ENCODE measurements at regions of chr6 and their contacts with region 1.

Region 1: DNA sequence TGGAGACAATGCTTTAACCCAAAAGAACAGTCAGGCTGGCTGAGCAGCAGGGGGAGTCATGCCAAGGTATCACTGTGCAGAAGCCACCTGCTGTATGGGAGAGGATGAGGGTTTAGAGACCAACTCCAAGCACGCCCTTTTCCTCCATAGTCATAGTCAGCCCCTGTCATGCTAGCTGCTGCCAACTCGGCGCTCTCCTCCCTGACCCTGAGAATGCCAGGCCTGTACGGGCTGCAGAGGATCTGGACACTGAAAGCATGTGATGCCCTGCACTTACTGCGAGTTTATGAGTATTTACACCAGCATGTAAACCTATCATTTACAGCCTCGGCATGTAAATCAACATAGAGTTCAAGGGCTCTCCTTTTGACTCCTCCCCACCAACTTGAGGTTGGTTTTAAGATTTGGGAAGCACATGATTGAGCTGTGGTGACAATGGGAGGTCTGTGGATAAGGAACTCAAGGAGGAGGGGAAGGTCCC is 11.7 kb upstream of the SCUBE3 start:
- DNase-seq: no peak
- H3K4me3 Mint-ChIP-seq: no peak overlapping the region
- H3K27ac Mint-ChIP-seq: no peak overlapping the region
- H3K4me1 Mint-ChIP-seq: no peaks in the 10 kb centered on the region
- H3K27me3 Mint-ChIP-seq: peaks cover 25% of the 10 kb centered on the region

Region 2: GRCh38 chr6:34922177-34922663 is 279.9 kb before region 1 on chr6:
- CTCF ChIA-PET with region 1: no interaction called
- POLR2A ChIA-PET with region 1: no interaction called
- intact Hi-C with region 1: no loop called
- DNase-seq: no peak
- H3K4me3 Mint-ChIP-seq: no peak overlapping the region
- H3K27ac Mint-ChIP-seq: no peak overlapping the region
- H3K4me1 Mint-ChIP-seq: peaks cover 2% of the 10 kb centered on the region
- H3K27me3 Mint-ChIP-seq: no peaks in the 10 kb centered on the region

Region 3: DNA sequence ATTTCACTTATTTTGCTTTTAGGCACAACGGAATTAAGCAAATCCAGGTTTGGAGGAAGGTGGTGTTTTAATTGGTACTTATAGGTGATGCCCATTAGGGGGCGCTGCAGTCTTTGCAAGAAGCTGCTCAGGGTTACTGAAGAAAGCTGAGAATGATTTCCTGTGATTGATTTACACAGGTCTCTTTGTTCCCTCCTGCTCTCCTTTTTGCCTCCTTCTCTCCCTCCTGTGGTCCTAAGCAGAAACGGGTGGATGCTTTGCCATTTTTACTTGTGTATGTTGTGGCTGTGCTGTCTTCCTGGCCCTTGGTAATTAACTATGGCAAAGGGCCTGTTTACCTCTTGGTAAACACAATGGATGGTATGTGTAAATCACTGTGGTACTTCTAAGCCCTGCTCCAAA is 215.3 kb before region 1 on chr6:
- CTCF ChIA-PET with region 1: interaction called, 86 read pairs
- POLR2A ChIA-PET with region 1: no interaction called
- intact Hi-C with region 1: loop called (anchors 2 kb)
- DNase-seq: peak; percentile 68
- H3K4me3 Mint-ChIP-seq: no peak overlapping the region
- H3K27ac Mint-ChIP-seq: no peak overlapping the region
- H3K4me1 Mint-ChIP-seq: no peaks in the 10 kb centered on the region
- H3K27me3 Mint-ChIP-seq: no peaks in the 10 kb centered on the region

Region 4: DNA sequence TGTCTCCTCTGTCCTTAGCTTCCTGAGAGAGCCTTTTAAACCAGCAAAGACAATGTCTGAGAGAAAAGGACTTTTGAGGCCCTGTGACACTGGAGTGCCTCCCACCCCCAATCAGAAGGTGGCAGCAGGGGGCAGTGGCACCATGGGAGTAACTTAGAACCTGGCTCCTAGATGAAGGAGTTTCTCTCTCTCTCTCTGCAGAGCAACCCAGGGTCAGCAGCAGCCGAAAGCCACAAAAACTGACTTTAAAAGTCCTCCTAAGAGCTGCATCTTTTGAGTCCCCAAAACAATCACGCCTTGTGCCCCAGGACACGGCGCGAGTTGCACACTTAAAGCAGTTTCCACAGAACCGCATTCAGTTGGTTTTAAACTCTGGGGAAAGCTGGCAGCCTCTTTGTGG is 55.7 kb before region 1 on chr6:
- CTCF ChIA-PET with region 1: interaction called, 82 read pairs
- POLR2A ChIA-PET with region 1: no interaction called
- intact Hi-C with region 1: loop called (anchors 1 kb)
- DNase-seq: peak; percentile 65
- H3K4me3 Mint-ChIP-seq: no peak overlapping the region
- H3K27ac Mint-ChIP-seq: no peak overlapping the region
- H3K4me1 Mint-ChIP-seq: peaks cover 25% of the 10 kb centered on the region
- H3K27me3 Mint-ChIP-seq: peaks cover 5% of the 10 kb centered on the region

Region 5: GRCh38 chr6:35161776-35162607 is 40.1 kb before region 1 on chr6:
- CTCF ChIA-PET with region 1: interaction called, 10 read pairs
- POLR2A ChIA-PET with region 1: no interaction called
- intact Hi-C with region 1: no loop called
- DNase-seq: no peak
- H3K4me3 Mint-ChIP-seq: no peak overlapping the region
- H3K27ac Mint-ChIP-seq: no peak overlapping the region
- H3K4me1 Mint-ChIP-seq: peaks cover 4% of the 10 kb centered on the region
- H3K27me3 Mint-ChIP-seq: peaks cover 5% of the 10 kb centered on the region

Region 6: DNA sequence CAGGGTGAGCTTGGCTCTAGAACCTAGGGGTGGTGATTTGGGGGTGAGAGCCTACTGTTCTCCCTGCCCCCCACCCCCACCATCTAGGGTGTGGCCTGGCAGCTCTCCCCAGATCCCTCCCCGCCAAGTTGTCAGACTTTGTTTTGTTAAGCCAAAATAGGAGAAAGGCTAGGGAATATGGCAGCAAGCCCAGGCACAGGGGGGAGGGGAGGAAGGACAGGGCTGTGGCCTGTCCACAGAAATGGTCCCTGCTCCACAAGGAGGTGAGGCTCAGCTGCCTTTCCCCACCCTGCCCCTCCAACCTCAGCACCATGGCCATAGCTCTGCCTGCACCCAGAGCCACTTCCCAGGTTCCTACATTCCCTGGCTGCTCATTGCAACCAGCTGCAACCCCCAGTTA is 28.8 kb after region 1 on chr6:
- CTCF ChIA-PET with region 1: interaction called, 14 read pairs
- POLR2A ChIA-PET with region 1: no interaction called
- intact Hi-C with region 1: no loop called
- DNase-seq: no peak
- H3K4me3 Mint-ChIP-seq: no peak overlapping the region
- H3K27ac Mint-ChIP-seq: no peak overlapping the region
- H3K4me1 Mint-ChIP-seq: no peaks in the 10 kb centered on the region
- H3K27me3 Mint-ChIP-seq: no peaks in the 10 kb centered on the region

Region 7: GRCh38 chr6:35511562-35511941 is 309.4 kb after region 1 on chr6:
- CTCF ChIA-PET with region 1: no interaction called
- POLR2A ChIA-PET with region 1: no interaction called
- intact Hi-C with region 1: no loop called
- DNase-seq: no peak
- H3K4me3 Mint-ChIP-seq: no peak overlapping the region
- H3K27ac Mint-ChIP-seq: no peak overlapping the region
- H3K4me1 Mint-ChIP-seq: no peaks in the 10 kb centered on the region
- H3K27me3 Mint-ChIP-seq: peaks cover 11% of the 10 kb centered on the region

Measured in activated CD4-positive, alpha-beta memory T cell treated with anti-CD3 and anti-CD28 coated beads for 36 hours (primary cell).